ENCODE measurements at regions of chr2 and their contacts with region 1.

Region 1: GRCh38 chr2:219388127-219388844 is 574 bp upstream of the DNPEP start:
- DNase-seq: peak; percentile 100

Region 2: DNA sequence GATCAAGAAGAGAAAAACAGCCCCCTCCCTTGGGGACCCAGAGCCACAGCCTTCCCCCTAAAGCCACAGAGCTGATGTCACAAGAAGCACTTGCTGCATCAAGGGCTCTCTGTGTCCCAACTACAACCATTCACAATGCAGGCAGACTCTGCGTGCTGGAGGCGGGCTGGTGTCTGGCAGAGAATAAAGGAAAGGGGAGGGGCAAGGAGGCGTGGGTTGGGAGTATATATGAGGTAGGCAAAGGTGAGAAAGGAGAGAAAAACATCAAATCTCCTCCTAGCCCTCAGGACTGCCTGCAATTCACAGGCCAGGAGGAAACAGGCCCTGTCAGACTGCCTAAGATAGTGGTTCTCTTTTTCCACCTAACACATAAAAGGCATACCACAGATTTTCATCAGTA is 278.8 kb before region 1 on chr2:
- intact Hi-C with region 1: no loop called
- DNase-seq: no peak

Region 3: GRCh38 chr2:219959471-219959870 is 571.2 kb after region 1 on chr2:
- intact Hi-C with region 1: loop called in 1 of 2 experiments (anchors 5 kb)
- DNase-seq: no peak

Measured in posterior vena cava (tissue), 2 donors.